Ovary (tissue), 10 donors: ENCODE measurements at regions of chr7 and their contacts with region 1.

Region 1: DNA sequence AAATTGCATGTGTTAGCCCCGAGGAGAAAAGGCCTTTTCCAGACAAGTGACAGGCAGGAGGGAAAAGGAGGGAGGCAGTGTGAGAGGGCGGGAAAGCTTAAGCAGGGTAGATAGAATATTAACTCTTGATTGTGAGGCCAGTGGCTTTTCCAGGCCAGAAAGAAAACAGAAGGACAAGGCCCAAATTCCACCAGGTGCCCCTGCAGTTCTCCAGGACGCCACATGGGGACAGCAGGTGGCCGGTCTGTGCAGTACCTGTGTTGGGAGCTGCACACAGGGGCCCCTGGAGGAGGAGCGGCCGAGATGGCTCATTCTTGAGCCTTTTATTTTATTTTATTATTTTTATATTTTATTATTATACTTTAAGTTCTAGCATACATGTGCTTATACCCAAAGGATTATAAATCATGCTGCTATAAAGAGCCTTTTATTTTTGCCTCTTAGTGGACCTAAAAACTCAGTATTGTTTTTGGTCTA is 141.3 kb upstream of the KLF14 start:
- DNase-seq: peak; percentile 44 to 63 (median 57)
- H3K4me3 ChIP-seq: no peak overlapping the region
- H3K27ac ChIP-seq: peak overlapping the region in 1 of 2 donors; percentile 23
- H3K4me1 ChIP-seq: peaks cover 16% of the 10 kb centered on the region
- H3K27me3 ChIP-seq: no peaks in the 10 kb centered on the region
- CTCF ChIP-seq: peak; percentile 23 to 57 (median 54)
- EP300 ChIP-seq: no peak
- POLR2A ChIP-seq: no peak

Region 2: GRCh38 chr7:130814778-130815335 is 60.4 kb before region 1 on chr7:
- intact Hi-C with region 1: no loop called
- DNase-seq: no peak
- H3K4me3 ChIP-seq: no peak overlapping the region
- H3K27ac ChIP-seq: no peak overlapping the region
- H3K4me1 ChIP-seq: no peaks in the 10 kb centered on the region
- H3K27me3 ChIP-seq: no peaks in the 10 kb centered on the region
- CTCF ChIP-seq: no peak
- EP300 ChIP-seq: no peak
- POLR2A ChIP-seq: no peak

Region 3: GRCh38 chr7:130926001-130926691 is 50.8 kb after region 1 on chr7:
- intact Hi-C with region 1: no loop called
- DNase-seq: no peak
- H3K4me3 ChIP-seq: no peak overlapping the region
- H3K27ac ChIP-seq: no peak overlapping the region
- H3K4me1 ChIP-seq: peaks cover 10% of the 10 kb centered on the region
- H3K27me3 ChIP-seq: no peaks in the 10 kb centered on the region
- CTCF ChIP-seq: no peak
- EP300 ChIP-seq: no peak
- POLR2A ChIP-seq: no peak

Region 4: DNA sequence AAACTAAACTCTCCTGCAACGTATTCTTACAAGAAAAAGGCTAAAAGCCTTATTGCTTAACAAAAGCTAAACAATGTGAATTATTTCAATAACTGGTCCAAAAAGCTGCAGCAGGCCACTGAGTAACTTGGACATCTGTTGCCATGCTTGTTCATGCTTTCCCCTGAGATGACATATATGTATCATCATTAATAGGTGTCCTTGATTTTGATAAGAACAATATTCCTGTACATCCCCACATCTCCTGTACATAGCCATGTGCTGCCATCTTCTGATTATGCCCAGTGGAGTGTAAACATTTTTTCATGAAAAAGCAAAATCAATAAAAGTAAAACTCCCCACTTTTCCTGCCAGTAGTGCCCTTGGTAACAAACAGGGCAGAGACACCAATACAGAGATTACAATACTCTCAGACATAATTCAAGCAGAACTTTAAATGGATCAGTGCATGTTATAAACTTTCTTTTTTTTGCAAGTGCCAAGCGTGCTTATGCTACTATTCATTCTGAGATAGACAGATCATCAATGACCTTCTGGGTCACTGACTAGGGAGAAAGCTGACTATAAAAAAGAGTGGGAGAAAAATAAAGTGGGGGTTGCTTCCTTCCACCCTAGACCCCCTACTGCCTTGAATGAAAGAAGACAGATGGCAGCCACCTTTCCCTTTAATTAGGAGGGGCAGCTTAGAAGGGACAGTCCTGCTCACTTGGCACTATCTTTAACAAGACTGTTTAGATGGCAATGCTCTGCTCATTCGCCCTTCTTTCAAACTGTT is 64.2 kb after region 1 on chr7:
- intact Hi-C with region 1: no loop called
- DNase-seq: no peak
- H3K4me3 ChIP-seq: peak overlapping the region; percentile 51
- H3K27ac ChIP-seq: no peak overlapping the region
- H3K4me1 ChIP-seq: peaks cover 18% of the 10 kb centered on the region
- H3K27me3 ChIP-seq: no peaks in the 10 kb centered on the region
- CTCF ChIP-seq: no peak
- EP300 ChIP-seq: no peak
- POLR2A ChIP-seq: no peak

Region 5: DNA sequence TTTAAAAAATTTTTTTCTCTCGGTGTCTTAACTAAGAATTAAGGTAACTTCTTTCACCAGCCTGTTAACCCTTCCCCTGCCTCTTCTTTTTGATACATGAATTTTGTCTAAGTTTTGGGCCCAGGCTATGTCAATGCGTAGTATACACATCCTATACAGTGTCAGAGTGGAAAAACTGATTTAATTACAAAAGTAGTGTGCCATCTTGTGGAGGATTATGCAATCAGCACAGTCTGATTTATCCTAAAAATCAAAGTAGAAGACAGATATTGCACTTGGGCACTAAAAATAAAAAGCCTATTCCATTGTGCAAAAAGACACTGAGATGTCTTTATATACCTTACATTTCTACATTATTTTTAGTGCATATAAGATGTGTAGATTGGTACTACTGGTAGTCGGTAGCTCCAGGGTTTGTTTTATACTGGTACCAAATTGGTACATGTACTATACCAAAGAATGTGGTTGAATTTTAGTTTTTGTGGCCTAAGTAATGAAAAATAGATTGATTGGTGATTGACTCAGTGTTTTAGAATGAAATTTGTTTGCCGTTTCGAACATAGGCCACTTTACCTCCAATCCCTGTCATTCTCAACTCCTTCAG is 549.0 kb after region 1 on chr7:
- intact Hi-C with region 1: loop called in 1 of 4 experiments (anchors 10 kb)
- DNase-seq: no peak
- H3K4me3 ChIP-seq: no peak overlapping the region
- H3K27ac ChIP-seq: no peak overlapping the region
- H3K4me1 ChIP-seq: no peaks in the 10 kb centered on the region
- H3K27me3 ChIP-seq: no peaks in the 10 kb centered on the region
- CTCF ChIP-seq: peak in 2 of 3 donors; percentile 34 to 65
- EP300 ChIP-seq: no peak
- POLR2A ChIP-seq: no peak